Activated naive CD4-positive, alpha-beta T cell treated with anti-CD3 and anti-CD28 coated beads for 36 hours (primary cell): ENCODE measurements at regions of chr20 and their contacts with region 1.

Region 1: DNA sequence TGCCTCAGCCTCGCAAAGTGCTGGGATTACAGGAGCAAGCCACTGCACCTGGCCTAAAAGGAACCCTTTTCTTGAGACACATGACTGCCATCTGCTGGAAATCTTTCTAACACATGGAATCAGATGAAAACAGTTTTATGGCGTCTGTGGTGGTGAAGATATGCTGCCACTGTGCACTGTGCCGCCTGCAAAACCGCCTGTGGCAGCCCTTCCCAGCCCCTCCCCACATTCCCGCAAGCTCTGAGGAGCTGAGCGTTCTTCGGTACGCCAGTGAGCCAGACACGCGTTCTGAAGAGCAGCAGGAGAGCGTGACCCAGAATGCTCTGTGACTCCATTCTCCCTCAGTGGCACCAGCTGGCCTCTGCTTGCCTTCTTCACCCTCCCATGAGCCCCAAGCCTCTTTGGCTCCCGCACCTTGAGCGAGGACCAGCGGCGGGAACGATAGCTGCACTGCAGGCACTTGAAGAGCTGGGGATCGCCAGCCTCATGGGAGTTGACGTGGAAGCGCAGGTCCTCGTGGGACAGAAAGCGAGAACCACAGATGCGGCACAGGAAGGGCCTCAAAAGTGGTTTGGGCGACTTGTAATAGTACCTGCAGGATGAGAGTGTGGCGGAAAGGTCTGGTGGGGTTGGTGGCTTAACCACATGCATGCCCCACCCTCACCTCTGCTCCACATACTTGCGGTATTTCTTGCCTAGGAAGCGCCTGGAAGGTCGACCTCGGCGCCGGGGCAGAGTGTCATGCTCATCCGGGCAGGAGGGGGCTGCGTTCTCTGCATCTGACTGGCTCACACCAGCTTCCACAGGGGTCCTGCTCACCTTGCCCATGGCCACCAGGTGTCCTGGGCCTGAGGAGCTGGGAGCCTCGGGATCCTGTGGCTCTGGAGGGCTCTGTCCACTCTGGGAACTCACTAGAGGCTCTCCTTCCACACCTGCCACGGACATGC is 8.7 kb downstream of the ZNF335 start:
- DNase-seq: no peak
- H3K4me3 Mint-ChIP-seq: no peak overlapping the region
- H3K27ac Mint-ChIP-seq: no peak overlapping the region
- H3K4me1 Mint-ChIP-seq: peaks cover 2% of the 10 kb centered on the region
- H3K27me3 Mint-ChIP-seq: no peaks in the 10 kb centered on the region

Region 2: DNA sequence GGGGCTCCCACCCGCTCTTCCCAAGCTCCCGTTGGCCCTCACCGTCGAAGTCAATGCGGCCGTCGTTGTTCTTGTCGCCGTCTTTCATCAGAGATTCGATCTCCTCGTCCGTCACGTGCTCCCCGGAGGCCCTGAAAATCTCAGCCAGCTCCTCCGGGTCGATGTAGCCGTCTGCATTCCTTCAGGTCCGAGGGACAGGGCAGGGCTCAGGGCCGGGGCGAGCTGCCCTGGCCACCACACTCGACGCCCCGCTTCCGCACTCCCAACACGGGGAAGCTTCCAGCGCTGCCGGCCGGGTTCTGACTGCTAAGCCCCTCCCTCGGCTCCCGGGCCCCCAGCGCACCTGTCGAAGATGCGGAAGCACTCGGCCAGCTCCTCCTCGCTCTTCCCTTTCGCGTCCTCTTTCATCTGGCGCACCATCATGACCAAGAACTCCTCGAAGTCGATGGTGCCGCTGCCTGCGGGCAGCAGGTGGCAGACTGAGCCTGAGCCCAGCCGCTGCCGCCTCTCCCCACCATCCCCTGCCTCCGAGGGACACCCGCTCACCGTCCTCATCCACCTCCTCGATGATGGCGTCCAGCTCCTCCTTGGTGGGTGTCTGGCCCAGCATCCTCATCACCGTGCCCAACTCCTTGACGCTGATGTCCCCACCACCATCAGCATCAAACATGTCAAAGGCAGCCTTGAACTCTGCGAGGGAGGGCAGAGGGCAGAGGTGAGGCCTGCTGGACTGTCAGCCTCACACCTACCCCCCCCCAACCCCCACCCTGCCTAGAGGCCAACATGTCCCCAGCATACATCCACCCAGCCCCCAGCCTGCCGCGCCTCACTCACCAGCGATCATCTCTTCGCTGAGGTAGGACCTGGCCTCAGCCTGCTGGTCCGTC is 139.1 kb before region 1 on chr20:
- CTCF ChIA-PET with region 1: interaction called, 22 read pairs
- intact Hi-C with region 1: loop called (anchors 2 kb)
- DNase-seq: peak; percentile 69
- H3K4me3 Mint-ChIP-seq: peak overlapping the region; percentile 67
- H3K27ac Mint-ChIP-seq: no peak overlapping the region
- H3K4me1 Mint-ChIP-seq: peaks cover 13% of the 10 kb centered on the region
- H3K27me3 Mint-ChIP-seq: peaks cover 35% of the 10 kb centered on the region

Region 3: GRCh38 chr20:46388937-46389336 is 425.6 kb after region 1 on chr20:
- CTCF ChIA-PET with region 1: no interaction called
- intact Hi-C with region 1: no loop called
- DNase-seq: no peak
- H3K4me3 Mint-ChIP-seq: no peak overlapping the region
- H3K27ac Mint-ChIP-seq: no peak overlapping the region
- H3K4me1 Mint-ChIP-seq: no peaks in the 10 kb centered on the region
- H3K27me3 Mint-ChIP-seq: no peaks in the 10 kb centered on the region